Naive thymus-derived CD4-positive, alpha-beta T cell (primary cell): ENCODE measurements at regions of chr11 and their contacts with region 1.

Region 1: GRCh38 chr11:66466225-66467027 is at the start of gene PELI3:
- DNase-seq: peak; percentile 86 to 95 (median 92)
- ATAC-seq: peak; percentile 97
- H3K4me3 ChIP-seq: peak within 1 kb of the TSS; percentile 78
- H3K4me3 Mint-ChIP-seq: peak within 1 kb of the TSS; percentile 89 to 96 (median 90)
- H3K27ac ChIP-seq: peak within 1 kb of the TSS; percentile 87
- H3K27ac Mint-ChIP-seq: peak within 1 kb of the TSS; percentile 87 to 97 (median 93)
- H3K4me1 ChIP-seq: peaks cover 8 to 10% of the 10 kb centered on the region in 2 donors
- H3K4me1 Mint-ChIP-seq: peaks cover 4 to 39% (median 24%) of the 10 kb centered on the region in 7 donors
- H3K27me3 ChIP-seq: no peaks in the 10 kb centered on the region
- H3K27me3 Mint-ChIP-seq: no peaks in the 10 kb centered on the region
- total RNA-seq, gene PELI3: 10.6 to 27.3 (median 18.6) TPM

Region 2: GRCh38 chr11:66268283-66268951 is 198.0 kb before region 1 on chr11 and contains the start of gene RAB1B:
- CTCF ChIA-PET with region 1: no interaction called
- POLR2A ChIA-PET with region 1: no interaction called
- intact Hi-C with region 1: loop called in 1 of 2 experiments (anchors 1 kb)
- DNase-seq: peak; percentile 99 to 100 (median 99)
- ATAC-seq: peak; percentile 89
- H3K4me3 ChIP-seq: peak within 1 kb of the TSS; percentile 91
- H3K4me3 Mint-ChIP-seq: peak within 1 kb of the TSS; percentile 88 to 100 (median 95)
- H3K27ac ChIP-seq: peak within 1 kb of the TSS; percentile 90
- H3K27ac Mint-ChIP-seq: peak within 1 kb of the TSS; percentile 95 to 99 (median 97)
- H3K4me1 ChIP-seq: peaks cover 16 to 38% of the 10 kb centered on the region in 2 donors
- H3K4me1 Mint-ChIP-seq: peaks cover 26 to 48% (median 34%) of the 10 kb centered on the region in 7 donors
- H3K27me3 ChIP-seq: no peaks in the 10 kb centered on the region
- H3K27me3 Mint-ChIP-seq: peaks cover 0 to 3% (median 0%) of the 10 kb centered on the region in 5 donors
- total RNA-seq, gene RAB1B: 60.6 to 151 (median 70.7) TPM

Region 3: GRCh38 chr11:66408488-66409214 is 57.8 kb before region 1 on chr11:
- CTCF ChIA-PET with region 1: no interaction called
- POLR2A ChIA-PET with region 1: no interaction called
- intact Hi-C with region 1: loop called in 1 of 2 experiments (anchors 1 kb)
- DNase-seq: peak; percentile 81 to 98 (median 88)
- ATAC-seq: peak; percentile 98
- H3K4me3 ChIP-seq: peak overlapping the region; percentile 51
- H3K4me3 Mint-ChIP-seq: peak overlapping the region; percentile 42 to 86 (median 84)
- H3K27ac ChIP-seq: no peak overlapping the region
- H3K27ac Mint-ChIP-seq: peak overlapping the region in 3 of 9 donors; percentile 4 to 75 (median 20)
- H3K4me1 ChIP-seq: peaks cover 4 to 5% of the 10 kb centered on the region in 2 donors
- H3K4me1 Mint-ChIP-seq: peaks cover 0 to 5% (median 4%) of the 10 kb centered on the region in 7 donors
- H3K27me3 ChIP-seq: no peaks in the 10 kb centered on the region
- H3K27me3 Mint-ChIP-seq: peaks cover 17 to 35% (median 28%) of the 10 kb centered on the region in 5 donors

Region 4: DNA sequence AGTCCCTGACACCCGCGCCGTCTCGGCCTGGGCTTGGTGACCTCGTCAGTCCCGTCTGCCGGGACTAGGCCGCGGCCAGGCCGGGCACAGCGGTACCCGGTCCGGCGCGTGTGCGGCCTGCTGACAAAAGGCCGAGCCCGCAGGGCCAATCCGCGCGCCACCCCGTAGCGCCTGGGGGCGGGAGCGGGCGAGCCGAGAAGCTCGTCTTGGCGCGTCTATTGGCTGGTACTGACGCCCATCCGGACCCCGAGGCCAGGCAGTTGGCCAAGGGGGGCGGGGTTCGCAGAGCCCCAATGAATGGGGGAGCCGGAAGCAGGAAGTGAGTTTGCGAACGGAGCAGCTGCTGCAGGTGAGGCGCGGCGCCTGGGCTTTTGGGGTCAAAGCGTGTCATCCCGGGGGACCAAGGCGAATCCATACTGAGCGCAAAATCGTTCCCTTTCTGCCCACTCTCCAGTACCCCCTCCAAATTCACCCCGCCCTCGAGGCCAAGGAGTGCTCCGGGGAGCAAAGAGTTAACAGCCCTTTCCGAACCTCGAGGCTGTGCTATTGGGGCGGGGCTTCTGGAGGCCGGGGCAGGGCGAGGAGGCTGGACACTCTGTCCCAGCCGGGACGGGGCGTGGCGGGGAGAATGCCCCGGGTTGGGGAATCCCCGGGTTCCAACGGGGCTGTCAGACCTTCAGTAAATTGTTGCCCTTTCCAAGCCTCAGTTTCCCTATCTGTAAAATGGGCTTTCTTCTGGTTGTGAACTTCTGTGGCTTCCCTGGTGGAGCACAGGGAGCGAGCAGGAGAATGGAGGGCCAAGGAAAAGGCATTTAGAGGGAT is 13.9 kb after region 1 on chr11 and contains the start of gene DPP3:
- CTCF ChIA-PET with region 1: interaction called, 6 read pairs
- POLR2A ChIA-PET with region 1: interaction called, 42 read pairs
- intact Hi-C with region 1: loop called (anchors 1 kb)
- DNase-seq: peak; percentile 87 to 97 (median 95)
- ATAC-seq: peak; percentile 99
- H3K4me3 ChIP-seq: peak within 1 kb of the TSS; percentile 86
- H3K4me3 Mint-ChIP-seq: peak within 1 kb of the TSS; percentile 86 to 92 (median 90)
- H3K27ac ChIP-seq: peak within 1 kb of the TSS; percentile 90
- H3K27ac Mint-ChIP-seq: peak within 1 kb of the TSS; percentile 75 to 91 (median 90)
- H3K4me1 ChIP-seq: peaks cover 9 to 14% of the 10 kb centered on the region in 2 donors
- H3K4me1 Mint-ChIP-seq: peaks cover 9 to 37% (median 17%) of the 10 kb centered on the region in 7 donors
- H3K27me3 ChIP-seq: no peaks in the 10 kb centered on the region
- H3K27me3 Mint-ChIP-seq: no peaks in the 10 kb centered on the region
- total RNA-seq, gene DPP3: 15.8 to 75.7 (median 19.4) TPM

Region 5: GRCh38 chr11:66530927-66531709 is 64.7 kb after region 1 on chr11:
- CTCF ChIA-PET with region 1: no interaction called
- POLR2A ChIA-PET with region 1: no interaction called
- intact Hi-C with region 1: no loop called
- DNase-seq: no peak
- ATAC-seq: no peak
- H3K4me3 ChIP-seq: no peak overlapping the region
- H3K4me3 Mint-ChIP-seq: no peak overlapping the region
- H3K27ac ChIP-seq: no peak overlapping the region
- H3K27ac Mint-ChIP-seq: no peak overlapping the region
- H3K4me1 ChIP-seq: no peaks in the 10 kb centered on the region
- H3K4me1 Mint-ChIP-seq: peaks cover 0 to 24% (median 8%) of the 10 kb centered on the region in 7 donors
- H3K27me3 ChIP-seq: no peaks in the 10 kb centered on the region
- H3K27me3 Mint-ChIP-seq: no peaks in the 10 kb centered on the region

Region 6: GRCh38 chr11:66638177-66639065 is 172.0 kb after region 1 on chr11 and contains the start of gene RBM4:
- CTCF ChIA-PET with region 1: no interaction called
- POLR2A ChIA-PET with region 1: interaction called, 4 read pairs
- intact Hi-C with region 1: loop called in 1 of 2 experiments (anchors 1 kb)
- DNase-seq: peak; percentile 80 to 99 (median 98)
- ATAC-seq: peak; percentile 93
- H3K4me3 ChIP-seq: peak within 1 kb of the TSS; percentile 91
- H3K4me3 Mint-ChIP-seq: peak within 1 kb of the TSS; percentile 92 to 100 (median 94)
- H3K27ac ChIP-seq: peak within 1 kb of the TSS; percentile 93
- H3K27ac Mint-ChIP-seq: peak within 1 kb of the TSS; percentile 87 to 98 (median 96)
- H3K4me1 ChIP-seq: peaks cover 44 to 48% of the 10 kb centered on the region in 2 donors
- H3K4me1 Mint-ChIP-seq: peaks cover 45 to 73% (median 68%) of the 10 kb centered on the region in 7 donors
- H3K27me3 ChIP-seq: no peaks in the 10 kb centered on the region
- H3K27me3 Mint-ChIP-seq: no peaks in the 10 kb centered on the region
- total RNA-seq, gene RBM4: 139 to 239 (median 198) TPM

Region 7: GRCh38 chr11:66842896-66843775 is 376.7 kb after region 1 on chr11 and contains the start of gene RCE1:
- CTCF ChIA-PET with region 1: no interaction called
- POLR2A ChIA-PET with region 1: no interaction called
- intact Hi-C with region 1: loop called in 1 of 2 experiments (anchors 2 kb)
- DNase-seq: peak; percentile 86 to 96 (median 91)
- ATAC-seq: peak; percentile 96
- H3K4me3 ChIP-seq: peak within 1 kb of the TSS; percentile 94
- H3K4me3 Mint-ChIP-seq: peak within 1 kb of the TSS; percentile 87 to 97 (median 93)
- H3K27ac ChIP-seq: peak within 1 kb of the TSS; percentile 96
- H3K27ac Mint-ChIP-seq: peak within 1 kb of the TSS; percentile 74 to 97 (median 92)
- H3K4me1 ChIP-seq: peaks cover 31 to 47% of the 10 kb centered on the region in 2 donors
- H3K4me1 Mint-ChIP-seq: peaks cover 31 to 58% (median 47%) of the 10 kb centered on the region in 7 donors
- H3K27me3 ChIP-seq: no peaks in the 10 kb centered on the region
- H3K27me3 Mint-ChIP-seq: no peaks in the 10 kb centered on the region
- total RNA-seq, gene RCE1: 24.6 to 47.1 (median 33.6) TPM